Cardiac septum (tissue), 1 donor: ENCODE measurements at regions of chr7 and their contacts with region 1.

Region 1: DNA sequence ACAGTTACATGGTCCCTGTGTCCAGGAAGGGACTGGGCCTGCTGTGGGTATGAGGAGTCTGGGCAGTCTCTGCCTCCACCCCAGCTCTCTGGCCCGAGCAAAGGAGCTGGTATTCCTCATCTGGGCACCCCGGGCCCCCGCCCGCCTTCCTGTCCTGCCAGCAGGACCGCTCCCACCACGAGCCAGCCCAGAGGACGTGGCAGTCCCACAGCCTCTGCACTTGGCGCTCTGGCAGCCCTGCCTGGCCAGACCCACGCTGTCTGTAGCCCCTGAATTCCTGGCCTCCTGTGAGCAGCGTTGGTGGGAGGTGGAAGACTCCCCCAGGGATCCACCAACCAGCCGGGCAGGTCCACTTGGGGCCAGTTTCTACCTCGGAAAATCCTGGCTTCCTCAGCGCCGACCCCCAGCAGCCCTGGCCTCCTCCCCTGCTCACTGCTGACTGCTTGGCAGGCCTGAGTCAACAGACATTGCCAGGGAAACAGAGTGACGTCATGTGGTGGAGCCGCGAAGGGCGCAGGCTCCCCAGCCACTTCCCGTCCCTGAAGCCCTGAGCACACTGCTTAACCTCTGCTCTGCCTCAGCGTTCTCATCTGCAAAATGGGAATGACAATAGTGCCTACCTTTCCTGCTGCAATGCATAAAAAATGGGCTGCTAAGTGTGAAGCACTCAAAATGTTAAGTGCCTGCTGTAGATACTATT is 21.6 kb upstream of the LIMK1 start:
- DNase-seq: peak; percentile 84

Region 2: DNA sequence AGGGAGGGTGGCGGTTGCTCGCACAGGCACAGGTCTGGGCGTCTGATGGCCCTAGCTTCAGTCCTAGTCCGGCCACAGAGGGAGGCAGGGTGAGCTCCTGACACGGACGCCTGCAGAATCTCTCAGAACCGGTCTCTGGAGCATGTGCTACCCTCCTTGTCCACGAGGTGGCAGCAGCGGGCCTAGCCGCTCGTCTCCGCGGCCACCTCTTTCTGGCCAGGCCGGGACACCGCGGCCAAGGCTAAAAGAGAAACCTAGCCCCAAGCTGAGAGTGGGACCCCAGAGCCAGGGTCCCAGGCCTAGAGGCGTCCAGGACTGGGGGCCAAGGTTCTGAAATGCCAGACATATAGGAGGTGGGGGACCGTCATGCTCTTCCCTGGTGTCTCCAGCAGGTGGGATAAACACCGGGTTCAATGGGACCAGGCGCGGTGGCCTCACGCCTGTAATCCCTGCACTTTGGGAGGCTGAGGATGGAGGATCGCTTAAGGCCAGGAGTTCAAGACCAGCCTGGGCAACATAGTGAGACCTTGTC is 144.7 kb after region 1 on chr7:
- intact Hi-C with region 1: loop called (anchors 10 kb)
- DNase-seq: peak; percentile 95